KBM-7 (cell line): ENCODE measurements at regions of chr22 and their contacts with region 1.

Region 1: DNA sequence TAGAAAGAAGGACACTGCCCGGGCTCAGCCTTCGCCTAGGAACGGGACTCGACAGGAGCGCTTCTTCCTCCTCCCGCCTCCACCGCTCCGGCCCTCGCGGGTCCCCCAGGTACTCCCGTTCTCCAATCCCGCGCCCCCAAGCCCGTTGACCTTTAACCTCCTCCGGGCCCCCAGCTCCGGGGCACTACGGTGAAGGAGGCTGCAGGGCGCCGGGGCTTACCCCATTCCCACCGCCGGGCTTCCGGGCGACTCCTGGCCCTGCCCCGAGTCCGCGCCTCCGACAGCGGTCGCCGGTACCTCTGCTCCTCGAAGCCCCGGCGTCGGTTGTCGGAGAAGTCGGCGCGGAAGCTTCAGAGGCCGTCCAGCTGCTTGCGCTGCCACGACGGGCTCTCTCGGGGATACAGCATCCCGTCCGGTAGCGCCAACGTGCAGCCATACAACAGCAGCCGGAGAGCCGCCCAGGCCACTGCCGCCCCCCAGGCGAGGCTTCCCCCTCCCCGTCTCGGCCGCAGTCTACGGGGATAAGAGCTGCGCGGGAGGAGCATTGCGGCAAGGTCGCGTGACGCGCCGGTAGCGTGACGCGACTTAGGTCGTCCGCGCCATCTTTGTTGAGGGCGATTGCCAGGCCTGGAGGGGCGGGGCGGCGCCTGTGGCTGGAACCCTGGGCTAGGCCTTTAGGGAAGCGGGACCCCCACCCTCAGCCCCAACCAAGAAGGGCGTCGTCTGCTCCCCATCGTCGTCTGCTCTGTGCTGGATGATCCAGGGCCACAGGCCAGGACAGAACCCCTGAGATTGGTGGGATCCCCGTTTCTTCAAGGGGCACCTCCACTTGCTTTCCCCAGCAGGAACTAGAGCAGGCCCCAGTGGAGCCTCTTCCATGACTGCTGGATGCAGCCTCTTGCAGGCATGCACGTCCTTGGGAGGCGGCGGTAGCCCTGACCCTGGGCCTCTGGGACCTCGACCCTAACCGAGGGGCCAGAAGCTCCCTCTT is 26.3 kb downstream of the RGL4 start:
- DNase-seq: peak; percentile 89

Region 2: DNA sequence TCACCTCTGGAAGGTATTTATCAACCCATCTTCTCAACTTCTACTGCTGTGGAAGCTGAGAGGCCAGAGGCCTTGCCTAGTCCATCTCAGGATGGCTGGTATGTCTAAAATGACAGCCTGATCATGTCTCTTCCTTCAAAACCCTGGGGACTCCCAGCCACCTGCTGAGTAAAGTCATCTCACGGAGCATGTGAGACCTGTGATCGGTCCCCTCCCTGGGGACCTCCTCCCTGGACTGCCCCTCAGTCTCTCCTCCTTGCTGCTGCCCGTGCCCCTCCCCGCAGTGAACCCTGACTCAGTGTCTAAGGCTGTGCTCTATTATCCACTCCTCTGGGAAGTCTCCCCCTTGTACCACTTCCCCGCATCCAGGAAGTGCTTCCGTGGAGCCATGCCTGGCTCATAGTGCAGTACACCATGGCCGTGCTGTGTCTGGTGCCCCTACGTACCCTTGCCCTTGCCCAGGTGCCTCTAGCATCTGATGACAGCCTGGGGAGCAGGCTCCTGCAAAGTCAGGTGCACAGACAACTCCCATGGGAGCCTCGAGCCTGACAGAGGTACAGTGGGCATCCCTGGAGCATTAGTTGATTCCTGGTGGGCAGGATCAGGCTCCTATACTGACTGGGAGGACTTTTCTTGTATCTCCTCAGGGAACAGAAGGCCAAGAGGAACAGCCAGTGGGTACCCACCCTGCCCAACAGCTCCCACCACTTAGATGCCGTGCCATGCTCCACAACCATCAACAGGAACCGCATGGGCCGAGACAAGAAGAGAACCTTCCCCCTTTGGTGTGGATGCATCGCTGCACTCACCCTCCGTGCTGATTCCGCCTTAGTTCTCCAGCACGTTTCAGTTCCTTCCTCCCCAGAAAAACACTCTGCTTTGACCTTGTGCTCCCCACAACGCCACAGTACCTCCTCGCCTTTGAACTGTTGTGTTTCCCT is 83.5 kb after region 1 on chr22:
- in situ Hi-C with region 1: loop called (anchors 25 kb)
- DNase-seq: no peak